ENCODE measurements at regions of chr15 and their contacts with region 1.

Region 1: DNA sequence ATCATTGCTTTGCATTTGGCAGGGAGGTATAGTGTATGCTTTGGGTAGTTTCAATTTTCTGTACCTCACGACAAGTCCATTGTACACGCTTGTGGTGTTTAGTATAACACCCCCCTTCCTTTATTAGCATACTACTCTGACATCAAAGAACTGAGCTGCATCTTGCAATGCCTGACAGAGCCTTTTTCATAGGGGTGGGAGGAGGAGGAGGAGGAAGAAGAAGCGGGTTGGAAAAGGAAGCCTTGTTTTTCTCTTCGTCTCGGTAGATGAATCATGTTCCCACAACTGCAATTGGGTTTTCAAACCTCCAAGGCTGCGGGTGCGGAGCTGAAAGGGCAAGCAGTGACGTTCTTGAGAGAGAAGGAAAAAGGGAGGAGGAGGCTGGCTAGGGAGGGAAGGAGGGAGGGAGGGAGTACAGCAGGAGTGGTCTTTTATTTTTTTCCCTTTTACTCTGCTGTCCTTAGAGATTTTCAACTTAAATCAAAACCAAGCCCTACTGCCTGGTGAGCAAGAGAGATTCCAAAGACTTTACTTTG is 175.7 kb downstream of the KLHL25 start:
- DNase-seq: peak; percentile 83
- H3K4me3 Mint-ChIP-seq: no peak overlapping the region
- H3K27ac Mint-ChIP-seq: no peak overlapping the region
- H3K4me1 Mint-ChIP-seq: peaks cover 31% of the 10 kb centered on the region
- H3K27me3 Mint-ChIP-seq: no peaks in the 10 kb centered on the region

Region 2: DNA sequence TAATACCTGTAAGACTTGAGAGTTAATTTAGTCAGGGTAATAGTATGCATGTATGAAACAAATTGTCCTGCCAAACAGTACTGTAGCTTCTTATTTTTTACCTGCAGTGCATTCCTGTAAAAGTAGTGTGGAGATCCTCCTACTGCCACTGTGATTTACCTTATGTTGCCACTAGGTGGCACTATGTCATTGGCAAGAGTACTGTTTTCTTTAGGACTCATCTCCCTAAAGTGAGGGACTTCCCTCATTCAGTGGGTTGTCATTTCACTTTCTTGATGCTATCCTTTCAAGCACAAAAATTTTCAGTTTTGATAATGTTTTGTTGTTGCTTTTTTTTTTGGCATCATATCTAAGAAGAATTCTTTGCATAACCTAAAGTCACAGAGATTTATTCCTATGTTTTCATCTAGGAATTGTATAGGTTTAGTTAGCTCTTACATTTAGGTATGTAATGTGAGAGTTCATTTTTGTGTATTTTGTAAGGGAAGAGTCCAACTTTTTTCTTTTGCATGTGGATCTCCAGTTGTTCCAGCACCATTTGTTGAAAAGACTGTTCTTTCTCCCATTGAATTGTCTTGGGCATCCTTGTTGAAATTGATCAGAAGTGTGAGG is 133.0 kb before region 1 on chr15:
- intact Hi-C with region 1: loop called (anchors 5 kb)
- DNase-seq: peak; percentile 92
- H3K4me3 Mint-ChIP-seq: no peak overlapping the region
- H3K27ac Mint-ChIP-seq: no peak overlapping the region
- H3K4me1 Mint-ChIP-seq: peaks cover 41% of the 10 kb centered on the region
- H3K27me3 Mint-ChIP-seq: no peaks in the 10 kb centered on the region

Region 3: DNA sequence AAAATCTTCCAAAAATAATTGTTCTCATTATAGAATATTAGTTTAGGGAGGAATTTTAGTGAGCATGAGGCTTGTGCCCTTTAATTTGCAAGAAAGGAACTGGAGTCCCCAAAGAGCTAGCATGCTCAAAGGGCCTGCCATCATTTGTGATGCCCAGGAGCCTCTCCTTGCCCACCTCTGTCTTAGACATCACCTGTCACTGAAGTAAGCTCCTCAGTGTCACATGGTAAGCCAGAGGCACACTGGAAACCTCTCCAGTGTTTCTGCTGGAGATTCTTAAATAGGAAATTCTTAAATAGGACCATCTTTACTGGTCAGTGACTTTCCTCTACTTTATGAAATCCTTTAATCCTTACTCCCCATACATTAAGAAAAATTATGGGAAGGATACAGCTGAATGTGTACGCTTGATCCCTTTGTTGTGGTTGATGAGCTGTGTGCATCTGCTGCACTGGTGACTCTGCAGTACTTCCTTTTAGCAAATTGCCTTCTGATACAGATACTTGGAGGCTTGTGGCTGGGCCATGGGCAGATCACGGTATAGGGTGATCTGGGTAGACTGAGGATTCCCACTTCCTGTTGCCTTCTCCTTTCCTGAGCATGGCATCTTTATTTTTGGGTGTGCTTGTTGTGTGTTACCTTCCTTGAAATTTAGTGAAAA is 21.7 kb before region 1 on chr15:
- intact Hi-C with region 1: loop called (anchors 1 kb)
- DNase-seq: peak; percentile 76
- H3K4me3 Mint-ChIP-seq: peak overlapping the region; percentile 56
- H3K27ac Mint-ChIP-seq: peak overlapping the region; percentile 14
- H3K4me1 Mint-ChIP-seq: peaks cover 33% of the 10 kb centered on the region
- H3K27me3 Mint-ChIP-seq: no peaks in the 10 kb centered on the region

Region 4: DNA sequence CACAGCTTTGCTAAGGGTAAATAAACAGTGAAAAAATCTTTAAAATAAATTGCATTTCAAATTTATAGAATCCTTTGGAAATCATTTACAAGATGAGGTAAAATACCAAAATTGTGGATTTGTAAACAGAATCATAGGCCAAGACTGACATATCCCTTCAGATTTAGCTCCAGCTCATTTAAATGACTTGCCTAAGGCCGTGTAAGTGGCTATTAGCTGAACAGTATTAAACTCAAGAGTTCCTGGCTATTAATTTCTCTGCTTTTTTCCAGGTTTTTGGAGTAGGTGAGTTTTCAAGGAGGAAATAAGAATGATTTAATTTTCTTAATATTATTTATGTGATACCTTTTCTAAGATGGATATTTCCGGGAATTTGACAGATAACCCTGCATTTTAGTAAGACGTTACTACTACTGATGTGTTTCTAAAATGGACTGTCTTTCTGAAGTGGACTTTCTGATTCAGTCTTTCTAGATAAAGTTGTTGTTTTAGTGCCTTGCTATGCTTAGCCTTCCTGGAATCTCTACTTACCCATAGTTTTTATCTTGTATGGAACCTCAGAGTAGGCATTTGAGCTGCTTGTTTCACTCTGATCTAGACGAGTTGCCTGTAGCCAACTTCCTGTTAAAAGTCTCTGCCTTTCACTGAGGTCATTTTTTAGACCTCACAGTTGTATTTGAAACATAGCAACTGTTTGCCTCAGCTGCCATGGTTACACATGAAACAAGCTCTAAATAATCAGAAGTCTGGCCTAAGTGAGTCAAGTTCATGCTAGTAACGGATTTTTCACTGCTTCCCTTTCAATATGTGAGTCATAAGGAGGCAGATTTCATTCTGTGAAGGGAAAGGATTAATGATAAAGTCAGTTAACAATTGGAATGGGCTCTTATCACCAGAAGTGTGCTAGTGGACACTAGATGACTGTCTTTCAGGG is 48.7 kb after region 1 on chr15:
- intact Hi-C with region 1: loop called (anchors 1 kb)
- DNase-seq: peak; percentile 89
- H3K4me3 Mint-ChIP-seq: peak overlapping the region; percentile 47
- H3K27ac Mint-ChIP-seq: peak overlapping the region; percentile 95
- H3K4me1 Mint-ChIP-seq: peaks cover 23% of the 10 kb centered on the region
- H3K27me3 Mint-ChIP-seq: no peaks in the 10 kb centered on the region

Region 5: GRCh38 chr15:85840065-85840801 is 221.2 kb after region 1 on chr15:
- intact Hi-C with region 1: loop called (anchors 10 kb)
- DNase-seq: peak; percentile 95
- H3K4me3 Mint-ChIP-seq: peak overlapping the region; percentile 76
- H3K27ac Mint-ChIP-seq: no peak overlapping the region
- H3K4me1 Mint-ChIP-seq: peaks cover 10% of the 10 kb centered on the region
- H3K27me3 Mint-ChIP-seq: peaks cover 14% of the 10 kb centered on the region

Measured in activated CD4-positive, alpha-beta T cell treated with anti-CD3 and anti-CD28 coated beads, Interleukin-2, amount 10 ng/mL, durations not matched to agents 24 days and 14 days (primary cell).